AG04450 (cell line): ENCODE measurements at regions of chr17 and their contacts with region 1.

Region 1: GRCh38 chr17:27601069-27601975 is 29.7 kb upstream of the LGALS9 start:
- DNase-seq: peak; percentile 72
- H3K4me3 ChIP-seq: no peak overlapping the region
- H3K27ac ChIP-seq: no peak overlapping the region
- H3K27me3 ChIP-seq: no peaks in the 10 kb centered on the region
- CTCF ChIP-seq: peak; percentile 98

Region 2: DNA sequence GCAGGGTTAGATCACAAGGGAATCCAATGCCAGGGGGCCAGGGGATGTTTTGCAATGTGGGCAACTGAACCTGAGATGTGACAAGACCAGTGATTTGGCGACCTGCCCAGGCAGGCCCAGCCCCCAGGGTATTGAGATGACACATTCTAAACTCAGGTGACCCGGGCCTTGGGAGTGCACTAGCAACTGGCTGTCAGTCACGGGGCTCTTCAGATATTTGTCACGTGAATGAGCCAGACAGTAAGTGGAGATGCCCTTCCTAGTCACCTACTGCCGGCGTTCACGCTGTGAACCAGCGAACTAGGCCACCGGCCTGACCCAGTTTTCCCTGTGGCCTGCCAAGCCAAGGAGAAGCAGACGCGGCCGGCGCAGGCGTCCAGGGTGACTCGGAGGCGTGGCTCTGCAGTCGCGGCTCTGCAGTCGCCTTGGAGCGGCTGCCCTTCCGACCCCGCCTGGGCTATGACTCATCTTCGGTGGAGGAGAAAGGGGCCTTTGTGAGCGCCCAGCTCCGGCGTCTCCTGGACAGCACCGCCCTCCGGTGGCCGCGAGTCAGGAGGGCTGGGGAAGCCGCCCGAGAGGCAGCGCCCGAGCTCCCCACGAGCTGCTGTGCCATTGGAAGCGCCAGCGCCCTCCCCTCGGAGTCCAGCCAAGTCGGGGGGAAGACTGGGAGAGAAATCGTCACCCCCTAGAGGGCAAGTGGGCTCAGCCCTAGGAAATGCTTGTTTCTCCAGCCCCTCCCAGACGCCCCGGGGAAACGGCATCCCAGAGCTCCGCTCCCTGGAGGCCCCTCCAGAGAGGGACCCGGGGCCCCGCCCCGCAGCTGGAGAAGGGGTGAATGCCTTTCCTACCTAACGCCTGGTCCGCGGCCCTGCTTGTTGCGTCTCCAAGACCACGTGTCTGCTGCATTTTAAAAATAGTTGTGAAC is 268.6 kb before region 1 on chr17:
- CTCF ChIA-PET with region 1: interaction called, 16 read pairs
- POLR2A ChIA-PET with region 1: no interaction called
- DNase-seq: peak; percentile 89
- H3K4me3 ChIP-seq: peak overlapping the region; percentile 61
- H3K27ac ChIP-seq: peak overlapping the region; percentile 86
- H3K27me3 ChIP-seq: no peaks in the 10 kb centered on the region
- CTCF ChIP-seq: peak; percentile 78

Region 3: GRCh38 chr17:27353461-27354050 is 247.8 kb before region 1 on chr17:
- CTCF ChIA-PET with region 1: interaction called, 81 read pairs
- POLR2A ChIA-PET with region 1: interaction called, 3 read pairs
- DNase-seq: peak; percentile 81
- H3K4me3 ChIP-seq: peak overlapping the region; percentile 69
- H3K27ac ChIP-seq: peak overlapping the region; percentile 78
- H3K27me3 ChIP-seq: peaks cover 3% of the 10 kb centered on the region
- CTCF ChIP-seq: peak; percentile 53

Region 4: GRCh38 chr17:27396941-27397340 is 204.4 kb before region 1 on chr17:
- CTCF ChIA-PET with region 1: no interaction called
- POLR2A ChIA-PET with region 1: no interaction called
- DNase-seq: no peak
- H3K4me3 ChIP-seq: no peak overlapping the region
- H3K27ac ChIP-seq: no peak overlapping the region
- H3K27me3 ChIP-seq: peaks cover 19% of the 10 kb centered on the region
- CTCF ChIP-seq: no peak

Region 5: GRCh38 chr17:27407916-27408846 is 193.1 kb before region 1 on chr17:
- CTCF ChIA-PET with region 1: interaction called, 26 read pairs
- POLR2A ChIA-PET with region 1: no interaction called
- DNase-seq: no peak
- H3K4me3 ChIP-seq: no peak overlapping the region
- H3K27ac ChIP-seq: no peak overlapping the region
- H3K27me3 ChIP-seq: peaks cover under 1% of the 10 kb centered on the region
- CTCF ChIP-seq: 0 out of 2 replicates have a peak, but pooled peaks have one; percentile 12

Region 6: GRCh38 chr17:27446569-27447301 is 154.6 kb before region 1 on chr17:
- CTCF ChIA-PET with region 1: interaction called, 14 read pairs
- POLR2A ChIA-PET with region 1: no interaction called
- DNase-seq: peak; percentile 99
- H3K4me3 ChIP-seq: no peak overlapping the region
- H3K27ac ChIP-seq: peak overlapping the region; percentile 68
- H3K27me3 ChIP-seq: peaks cover 2% of the 10 kb centered on the region
- CTCF ChIP-seq: no peak

Region 7: DNA sequence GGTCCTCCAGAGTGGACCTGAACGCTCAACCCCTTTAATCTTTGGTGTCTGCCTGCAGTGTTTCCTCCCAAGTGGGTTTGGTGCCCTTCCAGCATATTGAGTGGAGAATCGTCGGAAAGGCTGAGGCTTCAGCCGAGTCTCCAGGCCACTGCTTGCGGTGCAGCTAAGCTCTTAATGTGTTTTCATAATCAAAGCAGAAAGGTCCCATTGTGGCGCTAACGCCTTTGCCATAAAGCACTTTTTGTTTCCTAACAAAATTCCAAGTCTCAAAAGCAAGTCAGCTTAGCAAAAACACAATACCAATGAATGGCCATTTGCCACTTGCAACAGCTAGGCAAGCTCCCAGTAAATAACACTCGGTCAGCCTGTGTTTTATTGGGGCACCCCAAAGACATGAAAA is 87.5 kb before region 1 on chr17:
- CTCF ChIA-PET with region 1: interaction called, 11 read pairs
- POLR2A ChIA-PET with region 1: no interaction called
- DNase-seq: no peak
- H3K4me3 ChIP-seq: no peak overlapping the region
- H3K27ac ChIP-seq: no peak overlapping the region
- H3K27me3 ChIP-seq: no peaks in the 10 kb centered on the region
- CTCF ChIP-seq: no peak

Region 8: DNA sequence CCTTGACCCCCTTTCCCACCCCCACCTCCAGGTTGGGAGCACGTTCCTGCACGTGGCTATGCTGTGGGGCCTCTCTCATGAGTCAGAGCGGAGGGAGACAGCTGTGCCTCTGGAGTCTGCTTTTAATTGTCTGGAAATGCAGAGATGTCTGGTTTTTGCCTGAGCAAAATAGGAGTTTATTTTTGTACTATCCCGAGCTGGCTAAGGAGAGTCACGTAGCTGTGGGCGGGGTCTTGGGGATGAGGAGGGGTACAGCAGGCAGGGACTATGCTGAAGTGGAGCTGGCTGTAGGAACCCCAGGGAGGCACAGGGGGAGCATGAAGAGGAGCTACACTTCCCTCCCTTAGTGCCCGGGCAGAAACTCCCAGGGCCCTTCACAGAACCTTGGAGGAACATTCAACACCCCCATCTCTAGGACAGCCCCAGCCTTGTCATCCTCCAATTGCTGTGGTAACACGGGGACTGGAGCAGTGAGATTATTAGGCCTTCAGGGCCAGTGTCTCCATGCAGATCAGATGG is 15.1 kb before region 1 on chr17:
- CTCF ChIA-PET with region 1: interaction called, 43 read pairs
- POLR2A ChIA-PET with region 1: interaction called, 3 read pairs
- DNase-seq: peak; percentile 38
- H3K4me3 ChIP-seq: no peak overlapping the region
- H3K27ac ChIP-seq: peak overlapping the region; percentile 87
- H3K27me3 ChIP-seq: no peaks in the 10 kb centered on the region
- CTCF ChIP-seq: 0 out of 2 replicates have a peak, but pooled peaks have one; percentile 13